GM12878 (cell line): ENCODE measurements at regions of chr14 and their contacts with region 1.

Region 1: DNA sequence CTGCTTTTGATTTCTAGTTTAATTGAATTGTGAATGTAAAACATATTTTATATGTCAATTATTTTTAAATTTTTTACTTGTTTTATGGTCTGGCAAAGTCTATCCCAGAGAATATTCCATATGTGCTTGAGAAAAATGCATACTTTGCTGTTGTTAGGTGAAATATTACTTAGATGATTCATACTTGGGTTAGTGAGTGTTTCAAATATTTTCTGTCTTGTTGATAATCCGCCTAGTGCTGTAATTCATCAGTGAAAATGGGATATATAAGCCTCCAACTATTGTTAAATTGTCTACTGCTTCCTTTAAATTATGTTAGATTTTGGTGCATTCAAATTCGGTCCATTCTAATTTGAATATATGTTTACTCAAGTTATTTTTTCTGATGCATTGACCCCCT is 395.5 kb downstream of the LRFN5 start:
- DNase-seq: no peak
- ATAC-seq: no peak
- H3K4me3 ChIP-seq: no peak overlapping the region
- H3K27ac ChIP-seq: no peak overlapping the region
- H3K4me1 ChIP-seq: no peaks in the 10 kb centered on the region
- H3K27me3 ChIP-seq: no peaks in the 10 kb centered on the region
- CTCF ChIP-seq: no peak
- EP300 ChIP-seq: no peak
- POLR2A ChIP-seq: no peak
- RAD21 ChIP-seq: no peak

Region 2: DNA sequence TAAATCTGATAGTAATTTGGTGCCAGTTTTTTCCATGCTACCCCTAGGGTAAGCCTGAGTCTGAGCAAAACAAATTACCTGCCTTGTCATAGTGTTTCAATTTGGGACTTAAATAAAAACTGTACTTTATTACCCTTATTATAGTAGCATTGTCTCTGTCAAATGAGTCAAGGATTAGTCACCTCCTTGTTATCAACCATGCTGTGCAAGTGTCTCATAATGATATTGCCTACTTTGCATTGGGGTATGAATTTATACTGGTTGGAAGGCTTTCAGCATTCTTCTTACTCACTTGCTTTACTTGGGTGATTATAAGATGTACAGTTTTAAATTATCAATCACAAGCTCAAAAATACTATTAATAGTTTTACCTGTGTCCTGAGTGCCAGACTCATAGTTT is 15.4 kb before region 1 on chr14:
- CTCF ChIA-PET with region 1: no interaction called
- POLR2A ChIA-PET with region 1: no interaction called
- RAD21 ChIA-PET with region 1: no interaction called
- SMC1A ChIA-PET with region 1: interaction called, 12 read pairs
- in situ Hi-C with region 1: no loop called
- intact Hi-C with region 1: no loop called
- DNase-seq: no peak
- ATAC-seq: peak; percentile 85
- H3K4me3 ChIP-seq: no peak overlapping the region
- H3K27ac ChIP-seq: no peak overlapping the region
- H3K4me1 ChIP-seq: no peaks in the 10 kb centered on the region
- H3K27me3 ChIP-seq: no peaks in the 10 kb centered on the region
- CTCF ChIP-seq: no peak
- EP300 ChIP-seq: no peak
- POLR2A ChIP-seq: no peak
- RAD21 ChIP-seq: no peak